ENCODE measurements at regions of chr1 and their contacts with region 1.

Region 1: GRCh38 chr1:40668769-40669525 is 3.5 kb upstream of the RIMS3 start:
- DNase-seq: peak; percentile 72
- H3K4me3 Mint-ChIP-seq: peak overlapping the region; percentile 59
- H3K27ac Mint-ChIP-seq: no peak overlapping the region
- H3K4me1 Mint-ChIP-seq: peaks cover 9% of the 10 kb centered on the region
- H3K27me3 Mint-ChIP-seq: peaks cover 5% of the 10 kb centered on the region

Region 2: DNA sequence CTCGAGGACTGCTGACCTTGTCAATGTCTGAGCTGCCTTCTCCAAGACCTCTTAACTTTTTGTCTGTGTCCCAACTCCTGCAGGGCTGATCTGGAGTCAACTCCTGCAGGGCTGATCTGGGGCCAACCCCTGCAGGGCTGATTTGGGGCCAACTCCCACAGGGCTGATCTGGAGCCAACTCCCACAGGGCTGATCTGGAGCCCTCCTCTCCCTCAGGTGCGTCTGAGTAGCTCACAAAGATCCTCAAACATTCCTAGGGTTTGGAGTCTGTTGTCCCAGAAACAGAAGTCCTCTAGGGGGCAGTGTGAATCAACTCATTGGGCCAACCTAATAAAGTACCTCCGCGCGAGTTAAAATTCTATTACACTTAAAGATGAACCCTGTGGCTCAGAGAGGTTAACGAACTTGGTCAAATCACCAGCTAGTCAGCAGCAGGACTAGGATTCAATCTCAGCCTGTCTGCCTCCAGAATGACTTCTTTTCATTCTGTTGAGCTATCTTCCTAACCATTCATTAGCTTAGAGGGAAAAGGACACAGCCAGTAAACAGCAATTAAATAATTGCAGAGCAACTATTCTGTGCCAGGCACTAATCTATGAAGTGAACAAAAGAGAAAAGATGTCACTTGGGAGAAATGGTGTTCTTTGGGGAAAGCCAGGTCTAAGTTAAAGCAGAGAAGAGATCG is 524.9 kb before region 1 on chr1:
- intact Hi-C with region 1: loop called (anchors 1 kb)
- DNase-seq: peak; percentile 44
- H3K4me3 Mint-ChIP-seq: no peak overlapping the region
- H3K27ac Mint-ChIP-seq: no peak overlapping the region
- H3K4me1 Mint-ChIP-seq: peaks cover 32% of the 10 kb centered on the region
- H3K27me3 Mint-ChIP-seq: peaks cover 29% of the 10 kb centered on the region

Region 3: GRCh38 chr1:40338745-40339424 is 330.1 kb before region 1 on chr1:
- intact Hi-C with region 1: no loop called
- DNase-seq: peak; percentile 84
- H3K4me3 Mint-ChIP-seq: peak overlapping the region; percentile 38
- H3K27ac Mint-ChIP-seq: peak overlapping the region; percentile 75
- H3K4me1 Mint-ChIP-seq: peaks cover 53% of the 10 kb centered on the region
- H3K27me3 Mint-ChIP-seq: no peaks in the 10 kb centered on the region

Region 4: GRCh38 chr1:40404670-40405462 is 264.1 kb before region 1 on chr1:
- intact Hi-C with region 1: no loop called
- DNase-seq: no peak
- H3K4me3 Mint-ChIP-seq: peak overlapping the region; percentile 70
- H3K27ac Mint-ChIP-seq: peak overlapping the region; percentile 94
- H3K4me1 Mint-ChIP-seq: peaks cover 75% of the 10 kb centered on the region
- H3K27me3 Mint-ChIP-seq: no peaks in the 10 kb centered on the region

Region 5: GRCh38 chr1:40531381-40532061 is 137.4 kb before region 1 on chr1 and contains the start of gene ZNF684:
- intact Hi-C with region 1: loop called (anchors 2 kb)
- DNase-seq: peak; percentile 83
- H3K4me3 Mint-ChIP-seq: peak within 1 kb of the TSS; percentile 97
- H3K27ac Mint-ChIP-seq: peak within 1 kb of the TSS; percentile 88
- H3K4me1 Mint-ChIP-seq: peaks cover 26% of the 10 kb centered on the region
- H3K27me3 Mint-ChIP-seq: peaks cover 2% of the 10 kb centered on the region
- total RNA-seq, gene ZNF684: 4.9 and 6.0 TPM in 2 replicates

Region 6: DNA sequence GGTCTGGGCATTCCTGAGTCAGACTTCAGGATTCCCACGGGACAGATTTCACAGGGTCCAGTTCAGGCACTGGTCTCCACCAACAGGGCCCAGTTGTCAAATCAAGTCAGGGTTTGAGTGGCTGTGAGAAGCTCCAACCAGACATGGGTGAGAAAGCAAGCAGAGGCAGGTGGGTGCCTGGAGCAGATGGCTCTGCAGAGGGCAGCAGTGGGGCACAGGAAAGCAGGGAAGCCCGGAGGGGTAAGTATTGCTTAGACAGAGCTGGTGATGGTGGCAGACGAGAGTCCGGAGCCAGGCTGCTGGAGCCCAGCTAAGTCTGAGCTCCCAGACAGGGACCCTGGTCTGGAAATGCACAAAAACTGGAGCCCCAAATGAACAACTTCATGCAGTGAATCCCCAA is 43.9 kb before region 1 on chr1:
- intact Hi-C with region 1: loop called (anchors 5 kb)
- DNase-seq: no peak
- H3K4me3 Mint-ChIP-seq: no peak overlapping the region
- H3K27ac Mint-ChIP-seq: no peak overlapping the region
- H3K4me1 Mint-ChIP-seq: peaks cover 25% of the 10 kb centered on the region
- H3K27me3 Mint-ChIP-seq: no peaks in the 10 kb centered on the region

Region 7: DNA sequence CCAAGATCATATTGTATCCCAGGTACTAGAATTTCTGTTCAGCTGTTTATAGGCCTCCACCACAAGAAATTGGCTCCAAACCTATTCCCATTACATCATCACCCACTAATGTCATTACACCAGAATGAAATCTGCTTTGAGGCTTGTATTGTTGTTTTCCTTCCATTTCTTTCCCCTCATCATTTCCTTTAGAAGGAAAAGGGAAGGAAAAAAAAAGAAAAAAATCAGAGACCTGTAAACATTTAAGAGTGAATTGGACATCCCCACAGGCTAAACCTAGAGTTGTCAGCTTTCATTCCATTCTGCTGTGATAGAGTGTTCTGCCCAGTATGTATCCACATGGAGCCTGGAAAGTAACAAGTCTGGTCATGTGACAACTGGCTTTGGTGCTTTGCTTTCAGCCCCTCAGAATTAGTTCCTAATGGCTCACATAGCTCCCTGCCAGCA is 67.2 kb after region 1 on chr1:
- intact Hi-C with region 1: no loop called
- DNase-seq: no peak
- H3K4me3 Mint-ChIP-seq: no peak overlapping the region
- H3K27ac Mint-ChIP-seq: no peak overlapping the region
- H3K4me1 Mint-ChIP-seq: peaks cover 31% of the 10 kb centered on the region
- H3K27me3 Mint-ChIP-seq: no peaks in the 10 kb centered on the region

Region 8: DNA sequence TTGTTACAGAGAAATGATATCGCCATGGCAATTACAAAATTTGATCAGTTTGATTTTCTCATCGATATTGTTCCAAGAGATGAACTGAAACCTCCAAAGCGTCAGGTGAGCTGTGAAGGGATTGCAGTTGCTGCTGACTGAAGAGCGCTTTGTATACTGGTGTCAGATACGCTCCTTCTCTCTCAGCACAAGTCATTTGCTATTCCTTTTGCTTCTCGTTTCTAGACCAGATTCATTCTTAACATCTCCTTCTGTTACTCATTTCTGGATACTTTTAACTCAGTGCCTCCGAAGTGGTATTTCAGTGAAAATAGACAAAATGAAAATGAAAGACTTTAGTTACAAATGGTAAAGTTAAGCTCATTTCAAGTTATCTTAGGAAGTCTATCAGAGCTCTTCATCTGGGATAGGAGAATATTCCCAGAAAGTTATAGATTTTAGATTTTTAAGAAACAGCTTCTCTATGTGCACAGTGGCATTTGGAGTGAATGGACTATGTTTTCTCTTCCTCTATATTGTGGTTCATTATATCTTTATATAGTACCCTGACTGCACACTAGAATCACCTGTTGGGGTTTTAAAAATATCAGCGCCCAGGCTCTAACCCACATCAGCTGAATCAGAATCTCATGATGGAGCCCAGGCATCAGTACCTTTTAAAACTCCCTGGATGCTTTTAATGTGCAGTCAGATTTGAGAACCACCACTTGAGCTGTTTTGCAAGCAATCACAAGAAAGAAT is 84.4 kb after region 1 on chr1:
- intact Hi-C with region 1: loop called (anchors 5 kb)
- DNase-seq: no peak
- H3K4me3 Mint-ChIP-seq: peak overlapping the region; percentile 70
- H3K27ac Mint-ChIP-seq: peak overlapping the region; percentile 92
- H3K4me1 Mint-ChIP-seq: peaks cover 43% of the 10 kb centered on the region
- H3K27me3 Mint-ChIP-seq: no peaks in the 10 kb centered on the region

Region 9: GRCh38 chr1:40862008-40862863 is 193.3 kb after region 1 on chr1 and contains the start of gene CITED4:
- intact Hi-C with region 1: loop called (anchors 1 kb)
- DNase-seq: peak; percentile 95
- H3K4me3 Mint-ChIP-seq: peak within 1 kb of the TSS; percentile 92
- H3K27ac Mint-ChIP-seq: peak within 1 kb of the TSS; percentile 97
- H3K4me1 Mint-ChIP-seq: peaks cover 24% of the 10 kb centered on the region
- H3K27me3 Mint-ChIP-seq: peaks cover 35% of the 10 kb centered on the region
- total RNA-seq, gene CITED4: 4.1 and 5.0 TPM in 2 replicates

Measured in activated T-helper 1 cell treated with anti-CD3 and anti-CD28 coated beads, Interleukin-12 subunit alpha, Interleukin-12 subunit beta, Interleukin-2, Interleukin-4 antibody, amounts not matched to agents 30 ng/mL and 10 ng/mL and 1 ng/mL, durations not matched to agents 14 hours and 24 hours and 36 hours (primary cell).